Sciatic nerve (tissue), 2 donors: ENCODE measurements at regions of chr6 and their contacts with region 1.

Region 1: DNA sequence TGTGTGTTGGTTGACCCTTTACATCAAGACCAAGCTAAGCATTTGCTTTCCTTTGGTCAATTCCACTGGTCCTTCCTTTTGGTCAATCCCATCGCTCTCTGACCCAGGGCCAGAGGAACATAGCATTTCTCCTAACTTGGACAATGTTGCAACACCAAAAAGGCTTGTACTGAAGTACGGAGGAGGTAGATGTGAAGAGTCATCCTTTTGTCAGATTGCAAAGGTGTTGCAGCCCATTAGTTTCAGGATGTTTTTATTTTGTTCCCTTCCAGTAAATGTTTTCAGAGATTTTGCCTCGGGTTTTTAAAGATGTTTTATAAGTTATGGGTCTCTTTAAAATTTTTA is 24.6 kb downstream of the EDN1 start:
- DNase-seq: no peak
- ATAC-seq: no peak

Region 2: DNA sequence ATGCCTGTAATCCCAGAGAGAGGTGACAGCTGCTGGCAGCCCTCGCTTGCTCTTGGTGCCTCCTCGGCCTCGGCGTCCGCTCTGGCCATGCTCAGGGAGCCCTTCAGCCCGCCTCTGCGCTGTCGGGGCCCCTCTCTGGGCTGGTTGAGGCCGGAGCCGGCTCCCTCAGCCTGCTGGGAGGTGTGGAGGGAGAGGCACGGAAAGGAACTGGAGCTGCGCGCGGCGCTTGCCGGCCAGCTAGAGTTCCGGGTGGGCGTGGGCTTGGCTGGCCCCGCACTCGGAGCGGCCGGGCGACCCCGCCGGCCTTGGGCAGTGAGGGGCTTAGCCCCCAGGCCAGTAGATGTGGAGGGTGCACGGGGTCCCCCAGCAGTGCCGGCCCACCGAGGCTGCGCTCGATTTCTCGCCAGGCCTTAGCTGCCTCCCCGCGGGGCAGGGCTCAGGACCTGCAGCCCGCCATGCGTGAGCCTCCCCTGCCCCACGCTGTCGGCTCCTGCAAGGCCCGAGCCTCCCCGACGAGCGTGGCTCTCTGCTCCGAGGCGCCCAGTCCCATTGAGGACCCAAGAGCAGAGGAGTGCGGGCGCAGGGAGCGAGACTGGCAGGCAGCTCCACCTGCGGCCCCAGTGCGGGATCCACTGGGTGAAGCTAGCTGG is 1655.0 kb before region 1 on chr6:
- intact Hi-C with region 1: loop called (anchors 5 kb)
- DNase-seq: no peak
- ATAC-seq: no peak